BJ (cell line): ENCODE measurements at regions of chr17 and their contacts with region 1.

Region 1: GRCh38 chr17:16135461-16135860 is 79.9 kb downstream of the NCOR1 start:
- DNase-seq: no peak
- H3K4me3 ChIP-seq: no peak overlapping the region
- H3K27me3 ChIP-seq: no peaks in the 10 kb centered on the region
- CTCF ChIP-seq: no peak

Region 2: DNA sequence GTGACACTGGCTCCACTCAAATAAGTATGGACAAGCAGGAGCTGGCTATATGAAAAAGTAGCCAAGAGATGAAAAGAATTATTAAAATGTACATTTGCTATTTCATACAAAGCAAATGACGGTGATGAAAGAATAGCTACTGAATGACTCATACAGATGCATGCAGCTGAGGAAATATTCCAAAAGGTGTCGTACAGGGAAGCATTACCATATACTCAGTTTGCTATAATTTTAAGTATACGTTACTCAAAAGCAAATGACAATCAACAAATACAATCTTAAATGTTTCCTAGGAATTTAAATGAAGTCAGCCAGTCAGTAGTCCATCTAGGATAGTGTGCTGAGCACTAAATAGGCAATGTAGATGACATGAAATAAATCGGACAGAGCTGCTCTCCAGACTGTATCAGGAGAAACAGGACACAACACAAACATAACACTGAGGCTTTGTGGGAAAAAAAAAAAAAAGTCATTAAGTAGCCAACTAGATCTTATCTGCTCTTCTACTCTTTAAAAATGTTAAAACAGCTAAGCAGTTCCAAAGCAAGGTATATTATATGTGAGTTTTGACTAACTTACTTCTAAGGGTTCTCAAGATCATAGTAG is 14.9 kb after region 1 on chr17:
- CTCF ChIA-PET with region 1: no interaction called
- POLR2A ChIA-PET with region 1: no interaction called
- DNase-seq: no peak
- H3K4me3 ChIP-seq: no peak overlapping the region
- H3K27me3 ChIP-seq: no peaks in the 10 kb centered on the region
- CTCF ChIP-seq: no peak

Region 3: GRCh38 chr17:16189791-16190348 is 54.4 kb after region 1 on chr17:
- CTCF ChIA-PET with region 1: no interaction called
- POLR2A ChIA-PET with region 1: interaction called, 10 read pairs
- DNase-seq: no peak
- H3K4me3 ChIP-seq: no peak overlapping the region
- H3K27me3 ChIP-seq: no peaks in the 10 kb centered on the region
- CTCF ChIP-seq: no peak